Ascending aorta (tissue), 2 donors: ENCODE measurements at regions of chr3 and their contacts with region 1.

Region 1: GRCh38 chr3:137013955-137014688 is 56.3 kb downstream of the IL20RB start:
- DNase-seq: peak; percentile 48 to 95
- H3K4me3 ChIP-seq: peak overlapping the region; percentile 55 to 81
- H3K27ac ChIP-seq: peak overlapping the region; percentile 74 to 95
- H3K4me1 ChIP-seq: peaks cover 0 to 6% of the 10 kb centered on the region in 2 donors
- H3K27me3 ChIP-seq: no peaks in the 10 kb centered on the region
- CTCF ChIP-seq: peak; percentile 80 to 91 (median 81)

Region 2: DNA sequence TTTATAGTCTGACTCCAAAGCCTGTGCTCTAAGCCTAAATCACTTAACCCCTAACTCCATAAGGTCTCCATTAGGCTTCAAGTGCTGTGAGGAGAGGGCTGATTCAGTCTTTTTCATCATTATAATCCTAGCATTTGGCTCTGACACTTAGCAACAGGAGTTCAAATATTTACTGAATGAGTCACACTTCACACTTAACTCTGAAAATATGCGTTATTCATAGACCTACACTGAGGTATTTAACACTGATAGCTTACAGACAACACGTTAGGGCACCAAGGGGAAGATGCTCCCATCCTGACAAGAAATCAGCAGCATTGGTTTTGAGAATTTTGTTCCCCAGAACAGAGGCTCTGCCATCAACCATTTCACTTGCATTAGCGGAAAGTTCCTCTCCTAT is 871.5 kb before region 1 on chr3:
- intact Hi-C with region 1: no loop called
- DNase-seq: no peak
- H3K4me3 ChIP-seq: no peak overlapping the region
- H3K27ac ChIP-seq: peak overlapping the region; percentile 57 to 59
- H3K4me1 ChIP-seq: peaks cover 0 to 8% of the 10 kb centered on the region in 2 donors
- H3K27me3 ChIP-seq: no peaks in the 10 kb centered on the region
- CTCF ChIP-seq: no peak

Region 3: DNA sequence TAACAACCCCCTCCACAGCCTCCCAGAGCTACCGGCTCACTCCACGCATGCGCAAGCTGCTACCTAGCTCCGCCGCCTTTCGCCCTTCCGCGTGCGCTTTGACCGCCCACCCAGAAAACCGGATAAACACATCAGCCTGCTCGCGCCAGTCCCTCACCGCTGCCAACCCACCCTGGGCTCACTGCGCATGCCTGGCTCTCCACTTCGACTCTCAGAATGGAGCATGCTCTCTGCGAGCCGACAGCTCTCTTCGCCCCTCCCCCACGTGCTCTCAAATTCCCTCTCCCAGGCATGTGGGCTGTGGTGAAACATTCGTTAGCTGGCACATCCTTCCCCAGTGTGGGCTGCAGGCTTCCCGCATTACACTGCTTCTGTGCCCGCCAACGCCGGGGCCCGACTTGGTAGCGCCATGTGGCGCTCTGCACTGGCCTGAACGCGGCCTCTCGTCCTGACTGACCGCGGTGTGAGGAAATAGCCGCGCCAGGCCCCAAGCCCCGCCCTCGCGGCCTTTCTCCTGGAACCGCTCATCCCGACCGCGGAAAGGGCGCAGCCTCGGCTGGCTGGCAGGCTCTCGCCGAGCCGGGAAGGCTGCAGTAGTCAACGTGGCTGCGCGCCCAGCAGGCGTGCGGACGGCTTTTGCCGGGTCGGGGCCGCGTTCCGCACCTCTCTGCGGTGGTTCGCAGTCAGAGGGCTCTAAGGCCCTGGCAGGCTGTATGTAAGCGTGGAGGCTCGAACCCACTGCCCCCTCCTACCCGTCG is 817.5 kb before region 1 on chr3:
- intact Hi-C with region 1: loop called (anchors 10 kb)
- DNase-seq: peak; percentile 96 to 99
- H3K4me3 ChIP-seq: peak overlapping the region; percentile 69 to 93
- H3K27ac ChIP-seq: peak overlapping the region; percentile 99 to 100
- H3K4me1 ChIP-seq: peaks cover 3 to 18% of the 10 kb centered on the region in 2 donors
- H3K27me3 ChIP-seq: no peaks in the 10 kb centered on the region
- CTCF ChIP-seq: no peak

Region 4: DNA sequence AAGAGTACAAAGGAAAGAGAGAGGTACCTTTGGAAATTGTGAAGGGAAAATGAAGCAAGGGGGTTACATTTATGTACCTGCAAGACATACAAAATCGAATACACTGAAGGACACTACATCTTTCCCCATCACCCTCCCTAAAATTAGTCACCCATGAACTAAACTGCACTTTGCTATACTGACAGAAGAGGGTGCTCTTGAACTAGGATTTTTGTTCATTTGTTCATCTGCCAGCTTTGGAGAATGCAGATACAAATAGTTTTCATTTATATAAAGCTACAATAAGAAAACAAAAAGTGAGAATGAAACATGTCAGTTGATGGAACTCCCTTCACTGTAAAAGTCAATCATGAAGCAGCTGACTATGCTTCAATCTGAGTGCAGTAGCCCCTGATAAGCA is 708.2 kb before region 1 on chr3:
- intact Hi-C with region 1: loop called (anchors 5 kb)
- DNase-seq: no peak
- H3K4me3 ChIP-seq: no peak overlapping the region
- H3K27ac ChIP-seq: no peak overlapping the region
- H3K4me1 ChIP-seq: no peaks in the 10 kb centered on the region
- H3K27me3 ChIP-seq: no peaks in the 10 kb centered on the region
- CTCF ChIP-seq: peak in 1 of 3 experiments; percentile 21

Region 5: GRCh38 chr3:136787349-136787748 is 226.8 kb before region 1 on chr3:
- intact Hi-C with region 1: loop called (anchors 10 kb)
- DNase-seq: peak in 1 of 2 donors; percentile 15
- H3K4me3 ChIP-seq: peak overlapping the region; percentile 49 to 50
- H3K27ac ChIP-seq: peak overlapping the region; percentile 63 to 67
- H3K4me1 ChIP-seq: peaks cover 0 to 10% of the 10 kb centered on the region in 2 donors
- H3K27me3 ChIP-seq: no peaks in the 10 kb centered on the region
- CTCF ChIP-seq: no peak

Region 6: DNA sequence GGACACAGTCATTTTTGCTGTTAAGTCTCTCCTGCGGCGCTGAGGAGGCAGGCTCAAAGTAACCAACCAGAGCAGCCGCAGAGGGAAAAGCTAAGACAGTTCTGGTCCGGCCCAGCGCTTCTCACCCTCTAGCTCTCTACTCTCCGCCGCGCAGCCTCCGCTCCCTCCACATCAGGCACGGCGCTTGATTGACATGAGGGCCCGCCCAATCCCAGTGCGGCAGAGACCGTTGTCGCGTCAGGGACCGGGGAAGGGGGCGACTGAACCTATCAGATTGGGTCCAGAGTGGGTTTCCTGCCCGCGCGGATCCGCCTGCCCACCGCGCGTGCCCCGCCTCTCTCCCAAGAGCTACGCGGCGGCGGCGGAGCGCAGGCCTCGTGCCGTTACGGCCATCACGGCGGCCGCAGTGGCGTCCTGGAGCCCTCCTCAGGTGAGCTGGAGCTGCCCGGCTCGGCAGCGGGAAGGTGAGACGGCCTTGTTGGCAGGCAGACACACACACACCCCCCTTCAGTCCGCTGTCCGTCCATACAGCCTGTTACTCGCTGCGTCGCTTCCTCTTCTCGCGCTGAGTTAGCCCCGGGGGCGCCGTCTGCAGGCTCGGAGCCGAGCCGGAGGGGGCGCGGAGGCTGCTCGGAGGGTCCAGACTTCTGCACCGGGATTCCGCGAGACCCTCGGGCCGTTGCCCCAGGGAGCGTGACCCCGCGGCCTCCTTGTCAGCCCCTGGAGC is 152.1 kb before region 1 on chr3 and contains the start of gene NCK1:
- intact Hi-C with region 1: loop called (anchors 2 kb)
- DNase-seq: peak; percentile 97 to 99
- H3K4me3 ChIP-seq: peak within 1 kb of the TSS; percentile 78 to 85
- H3K27ac ChIP-seq: peak within 1 kb of the TSS; percentile 91 to 92
- H3K4me1 ChIP-seq: peaks cover 0 to 9% of the 10 kb centered on the region in 2 donors
- H3K27me3 ChIP-seq: no peaks in the 10 kb centered on the region
- CTCF ChIP-seq: peak in 2 of 3 experiments; percentile 14 to 17
- total RNA-seq, gene NCK1: 45.6 TPM

Region 7: DNA sequence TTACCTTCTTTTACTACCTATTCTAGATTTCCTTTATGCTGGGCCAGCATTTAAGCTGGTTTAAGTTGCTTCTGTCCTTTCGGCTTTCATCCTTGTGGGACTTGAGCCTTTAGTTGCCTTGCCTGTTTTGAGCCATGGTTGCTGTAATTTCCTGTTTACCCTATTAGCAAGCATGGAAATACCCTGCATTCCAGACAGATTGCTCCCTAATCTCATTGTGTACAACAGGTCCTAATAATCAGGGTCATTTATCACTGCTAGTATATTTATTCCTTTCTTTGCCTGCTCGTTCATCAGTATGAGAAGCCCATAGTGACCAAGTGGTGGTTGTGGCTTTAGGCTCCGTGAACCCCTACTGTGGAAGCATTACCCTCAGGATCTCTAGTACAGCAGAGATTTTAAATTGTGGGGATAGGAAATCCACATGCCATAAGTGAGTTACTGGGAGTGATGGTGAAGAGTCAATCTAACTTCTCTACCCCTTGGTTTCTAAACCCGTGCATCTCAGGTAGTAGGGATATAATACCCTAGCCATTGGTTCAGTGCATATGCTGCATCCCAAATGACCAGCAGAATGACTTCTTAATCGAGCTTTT is 120.2 kb before region 1 on chr3:
- intact Hi-C with region 1: no loop called
- DNase-seq: no peak
- H3K4me3 ChIP-seq: no peak overlapping the region
- H3K27ac ChIP-seq: no peak overlapping the region
- H3K4me1 ChIP-seq: peaks cover 0 to 2% of the 10 kb centered on the region in 2 donors
- H3K27me3 ChIP-seq: no peaks in the 10 kb centered on the region
- CTCF ChIP-seq: no peak

Region 8: DNA sequence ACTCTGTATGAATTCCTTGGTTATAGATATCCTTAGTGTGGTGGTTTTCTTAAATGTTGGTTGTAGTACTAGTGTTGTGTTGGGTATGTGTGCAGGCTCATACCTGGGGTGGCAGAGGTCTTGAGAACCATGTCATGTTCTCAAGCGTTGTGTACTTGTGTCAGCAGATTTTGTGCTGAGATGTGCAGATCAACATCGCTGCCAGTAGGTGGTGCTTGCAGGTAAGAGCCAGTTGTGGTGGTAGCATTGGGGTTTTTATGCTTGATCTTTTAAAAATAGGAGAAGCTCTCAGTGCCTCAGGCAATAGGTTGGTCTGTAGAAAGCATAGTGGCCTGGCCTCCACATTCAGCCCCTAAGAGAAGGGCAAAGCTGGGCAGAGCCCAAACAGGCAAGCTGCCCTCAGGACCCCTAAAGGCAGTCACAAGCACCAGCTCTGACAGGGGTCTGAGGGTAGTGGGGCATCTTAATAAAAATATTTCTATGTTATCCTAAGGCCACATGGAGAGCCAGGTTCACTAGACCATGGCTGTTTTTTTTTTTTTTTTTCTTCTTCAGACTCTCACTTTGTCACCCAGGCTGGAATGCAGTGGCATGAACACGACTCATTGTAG is 107.7 kb after region 1 on chr3:
- intact Hi-C with region 1: no loop called
- DNase-seq: no peak
- H3K4me3 ChIP-seq: no peak overlapping the region
- H3K27ac ChIP-seq: no peak overlapping the region
- H3K4me1 ChIP-seq: no peaks in the 10 kb centered on the region
- H3K27me3 ChIP-seq: no peaks in the 10 kb centered on the region
- CTCF ChIP-seq: no peak